ENCODE measurements at regions of chr13 and their contacts with region 1.

Region 1: GRCh38 chr13:93309886-93310523 is 83.4 kb downstream of the GPC6 start:
- DNase-seq: no peak
- ATAC-seq: no peak
- H3K4me3 ChIP-seq: no peak overlapping the region
- H3K4me3 Mint-ChIP-seq: no peak overlapping the region
- H3K27ac ChIP-seq: no peak overlapping the region
- H3K27ac Mint-ChIP-seq: no peak overlapping the region
- H3K4me1 ChIP-seq: no peaks in the 10 kb centered on the region
- H3K4me1 Mint-ChIP-seq: no peaks in the 10 kb centered on the region
- H3K27me3 ChIP-seq: no peaks in the 10 kb centered on the region
- H3K27me3 Mint-ChIP-seq: no peaks in the 10 kb centered on the region
- CTCF ChIP-seq: no peak

Region 2: GRCh38 chr13:93660391-93661063 is 350.5 kb after region 1 on chr13:
- CTCF ChIA-PET with region 1: no interaction called
- POLR2A ChIA-PET with region 1: no interaction called
- intact Hi-C with region 1: loop called in 1 of 2 experiments (anchors 10 kb)
- DNase-seq: no peak
- ATAC-seq: no peak
- H3K4me3 ChIP-seq: no peak overlapping the region
- H3K4me3 Mint-ChIP-seq: no peak overlapping the region
- H3K27ac ChIP-seq: no peak overlapping the region
- H3K27ac Mint-ChIP-seq: no peak overlapping the region
- H3K4me1 ChIP-seq: no peaks in the 10 kb centered on the region
- H3K4me1 Mint-ChIP-seq: no peaks in the 10 kb centered on the region
- H3K27me3 ChIP-seq: no peaks in the 10 kb centered on the region
- H3K27me3 Mint-ChIP-seq: no peaks in the 10 kb centered on the region
- CTCF ChIP-seq: no peak

Measured in CD8-positive, alpha-beta T cell (primary cell).